ENCODE measurements at regions of chr12 and their contacts with region 1.

Region 1: DNA sequence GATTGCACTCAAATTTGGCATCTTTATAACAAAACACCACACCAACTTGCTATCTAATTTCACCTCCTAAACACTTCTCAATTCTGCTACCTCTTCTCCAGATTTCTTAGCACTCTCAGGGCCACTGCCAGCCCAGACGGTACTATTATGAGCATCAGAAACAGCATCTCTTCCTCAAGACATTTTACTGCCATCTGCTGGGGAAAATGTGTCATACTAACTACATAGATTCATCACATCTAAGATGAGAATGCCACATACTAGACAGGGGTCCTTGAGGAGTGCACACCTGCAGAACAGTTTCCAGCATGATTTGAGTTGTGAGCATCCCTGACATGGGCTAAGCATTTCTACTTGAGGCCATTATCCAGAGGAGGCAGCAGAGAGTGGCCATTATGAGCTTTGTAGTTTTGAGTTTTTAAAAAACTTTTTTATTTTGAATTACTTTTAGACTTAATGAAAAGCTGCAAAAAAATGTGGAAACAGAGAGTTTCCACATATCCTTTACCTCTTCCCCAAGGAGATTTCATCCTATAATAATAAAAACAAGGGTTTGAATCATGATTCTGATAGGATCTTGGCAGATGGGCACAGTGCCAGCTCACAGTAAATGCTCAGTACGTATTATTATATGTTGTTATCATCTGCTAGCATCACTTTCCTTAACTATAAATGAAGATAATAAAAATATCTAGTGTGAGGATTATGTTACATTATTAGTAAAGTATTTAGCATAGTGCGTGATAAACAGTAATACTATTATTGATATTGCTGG is 15.2 kb upstream of the GRIP1 start:
- DNase-seq: no peak
- ATAC-seq: peak; percentile 94
- H3K4me3 Mint-ChIP-seq: no peak overlapping the region
- H3K27ac Mint-ChIP-seq: no peak overlapping the region
- H3K4me1 Mint-ChIP-seq: peaks cover 16% of the 10 kb centered on the region
- H3K27me3 Mint-ChIP-seq: peaks cover 2% of the 10 kb centered on the region
- CTCF ChIP-seq: no peak

Region 2: GRCh38 chr12:65948320-65949008 is 745.6 kb before region 1 on chr12:
- CTCF ChIA-PET with region 1: no interaction called
- POLR2A ChIA-PET with region 1: no interaction called
- intact Hi-C with region 1: no loop called
- DNase-seq: no peak
- ATAC-seq: no peak
- H3K4me3 Mint-ChIP-seq: no peak overlapping the region
- H3K27ac Mint-ChIP-seq: no peak overlapping the region
- H3K4me1 Mint-ChIP-seq: no peaks in the 10 kb centered on the region
- H3K27me3 Mint-ChIP-seq: peaks cover 10% of the 10 kb centered on the region
- CTCF ChIP-seq: no peak

Region 3: DNA sequence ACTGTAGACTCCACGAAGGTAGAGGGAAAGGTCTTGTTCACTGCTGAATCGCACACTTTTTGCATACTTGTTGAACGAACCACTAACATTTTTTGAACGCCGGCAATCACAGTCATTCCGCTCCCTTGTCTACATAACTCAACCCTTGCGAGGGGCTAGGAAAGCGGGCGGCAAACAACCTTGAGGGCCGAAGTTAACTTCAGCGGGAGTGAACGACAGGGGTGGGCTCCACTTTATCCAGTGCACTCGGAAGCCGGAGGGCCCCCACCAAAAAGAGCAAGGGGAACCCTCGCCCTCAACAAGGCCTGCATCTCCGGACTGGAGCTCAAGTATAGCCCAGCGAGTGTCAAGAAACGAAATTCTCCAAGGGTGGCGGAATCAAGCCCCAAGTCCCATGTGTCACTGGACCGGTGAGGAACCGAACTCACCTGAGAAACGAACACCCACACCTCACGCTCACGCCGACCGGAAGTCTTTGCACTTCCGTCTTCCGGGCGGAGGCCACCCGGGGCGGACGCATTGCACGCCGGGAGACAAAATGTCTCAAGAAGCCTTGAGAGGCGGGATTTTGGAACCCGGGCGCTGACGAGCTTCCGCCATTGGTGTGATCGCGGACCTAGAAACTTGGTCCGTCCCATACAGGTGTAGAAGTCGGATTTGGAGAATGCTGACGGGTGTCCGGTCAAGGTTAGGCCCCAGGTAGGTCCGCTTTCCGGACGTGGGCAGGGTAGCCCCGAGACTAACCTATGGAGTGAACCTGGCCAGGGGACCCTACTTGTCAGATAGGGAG is 563.6 kb before region 1 on chr12 and contains the start of gene LLPH:
- CTCF ChIA-PET with region 1: no interaction called
- POLR2A ChIA-PET with region 1: no interaction called
- intact Hi-C with region 1: loop called (anchors 5 kb)
- DNase-seq: peak; percentile 78
- ATAC-seq: peak; percentile 94
- H3K4me3 Mint-ChIP-seq: peak within 1 kb of the TSS; percentile 99
- H3K27ac Mint-ChIP-seq: peak within 1 kb of the TSS; percentile 96
- H3K4me1 Mint-ChIP-seq: peaks cover 43% of the 10 kb centered on the region
- H3K27me3 Mint-ChIP-seq: no peaks in the 10 kb centered on the region
- CTCF ChIP-seq: no peak
- total RNA-seq, gene LLPH: 29.5 and 35.5 TPM in 2 replicates

Region 4: GRCh38 chr12:66235626-66236281 is 458.3 kb before region 1 on chr12:
- CTCF ChIA-PET with region 1: no interaction called
- POLR2A ChIA-PET with region 1: no interaction called
- intact Hi-C with region 1: loop called (anchors 1 kb)
- DNase-seq: no peak
- ATAC-seq: no peak
- H3K4me3 Mint-ChIP-seq: peak overlapping the region; percentile 70
- H3K27ac Mint-ChIP-seq: no peak overlapping the region
- H3K4me1 Mint-ChIP-seq: peaks cover 31% of the 10 kb centered on the region
- H3K27me3 Mint-ChIP-seq: peaks cover under 1% of the 10 kb centered on the region
- CTCF ChIP-seq: no peak

Region 5: DNA sequence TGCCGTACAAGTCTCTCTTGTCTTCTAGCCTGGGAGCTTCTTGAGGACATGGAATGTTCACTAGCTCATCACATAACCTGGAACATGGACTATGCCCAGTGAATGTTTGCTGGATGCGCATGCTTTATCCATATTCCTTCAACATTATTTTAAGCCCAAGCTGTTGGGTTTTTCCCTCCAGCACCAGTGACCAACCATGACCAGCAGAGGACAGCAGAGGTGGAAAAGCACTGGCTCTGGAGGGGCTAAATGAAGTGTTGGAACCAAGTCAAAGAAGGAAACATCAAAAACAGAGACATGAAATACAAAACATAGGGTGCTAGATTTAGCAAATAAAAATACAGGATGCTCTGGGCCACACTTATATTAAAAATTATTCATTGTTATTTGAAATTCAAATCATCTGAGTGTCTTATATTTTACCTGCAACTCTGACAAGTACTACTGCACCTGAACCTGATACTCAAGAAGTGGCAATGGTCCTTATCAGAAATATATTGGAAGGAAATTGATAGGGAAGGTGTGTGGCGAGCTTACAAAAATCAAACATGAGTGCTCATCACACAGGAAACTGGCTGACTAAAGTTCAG is 414.9 kb before region 1 on chr12:
- CTCF ChIA-PET with region 1: interaction called, 3 read pairs
- POLR2A ChIA-PET with region 1: no interaction called
- intact Hi-C with region 1: loop called (anchors 2 kb)
- DNase-seq: no peak
- ATAC-seq: no peak
- H3K4me3 Mint-ChIP-seq: no peak overlapping the region
- H3K27ac Mint-ChIP-seq: no peak overlapping the region
- H3K4me1 Mint-ChIP-seq: no peaks in the 10 kb centered on the region
- H3K27me3 Mint-ChIP-seq: peaks cover 12% of the 10 kb centered on the region
- CTCF ChIP-seq: no peak

Region 6: GRCh38 chr12:66409195-66409871 is 284.8 kb before region 1 on chr12:
- CTCF ChIA-PET with region 1: interaction called, 5 read pairs
- POLR2A ChIA-PET with region 1: no interaction called
- intact Hi-C with region 1: loop called (anchors 1 kb)
- DNase-seq: no peak
- ATAC-seq: no peak
- H3K4me3 Mint-ChIP-seq: no peak overlapping the region
- H3K27ac Mint-ChIP-seq: no peak overlapping the region
- H3K4me1 Mint-ChIP-seq: no peaks in the 10 kb centered on the region
- H3K27me3 Mint-ChIP-seq: no peaks in the 10 kb centered on the region
- CTCF ChIP-seq: no peak

Region 7: DNA sequence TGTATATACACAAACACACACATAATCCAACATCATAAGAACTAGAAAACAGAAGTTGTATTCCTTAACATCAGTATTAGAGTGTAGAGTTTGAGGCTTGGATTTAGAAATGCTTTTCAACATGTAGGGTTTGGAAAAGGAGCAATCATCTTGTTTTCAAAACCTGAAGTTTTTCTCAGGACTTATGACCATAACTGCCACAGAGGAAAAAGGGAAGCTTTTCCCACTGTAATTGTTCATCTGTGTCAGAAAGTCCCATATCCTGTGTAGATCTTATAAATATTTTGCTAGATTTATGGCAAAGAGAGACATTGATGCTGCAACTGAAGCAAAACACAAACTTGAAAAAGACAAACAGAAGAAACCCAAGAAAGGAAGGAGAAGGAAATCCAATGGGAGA is 130.9 kb before region 1 on chr12:
- CTCF ChIA-PET with region 1: no interaction called
- POLR2A ChIA-PET with region 1: no interaction called
- intact Hi-C with region 1: no loop called
- DNase-seq: no peak
- ATAC-seq: no peak
- H3K4me3 Mint-ChIP-seq: no peak overlapping the region
- H3K27ac Mint-ChIP-seq: no peak overlapping the region
- H3K4me1 Mint-ChIP-seq: peaks cover 5% of the 10 kb centered on the region
- H3K27me3 Mint-ChIP-seq: no peaks in the 10 kb centered on the region
- CTCF ChIP-seq: no peak

Region 8: GRCh38 chr12:66708704-66709456 is 14.8 kb after region 1 on chr12:
- CTCF ChIA-PET with region 1: interaction called, 10 read pairs
- POLR2A ChIA-PET with region 1: no interaction called
- intact Hi-C with region 1: no loop called
- DNase-seq: no peak
- ATAC-seq: no peak
- H3K4me3 Mint-ChIP-seq: no peak overlapping the region
- H3K27ac Mint-ChIP-seq: no peak overlapping the region
- H3K4me1 Mint-ChIP-seq: peaks cover 21% of the 10 kb centered on the region
- H3K27me3 Mint-ChIP-seq: peaks cover 2% of the 10 kb centered on the region
- CTCF ChIP-seq: peak; percentile 41